ENCODE measurements at regions of chr17 and their contacts with region 1.

Region 1: DNA sequence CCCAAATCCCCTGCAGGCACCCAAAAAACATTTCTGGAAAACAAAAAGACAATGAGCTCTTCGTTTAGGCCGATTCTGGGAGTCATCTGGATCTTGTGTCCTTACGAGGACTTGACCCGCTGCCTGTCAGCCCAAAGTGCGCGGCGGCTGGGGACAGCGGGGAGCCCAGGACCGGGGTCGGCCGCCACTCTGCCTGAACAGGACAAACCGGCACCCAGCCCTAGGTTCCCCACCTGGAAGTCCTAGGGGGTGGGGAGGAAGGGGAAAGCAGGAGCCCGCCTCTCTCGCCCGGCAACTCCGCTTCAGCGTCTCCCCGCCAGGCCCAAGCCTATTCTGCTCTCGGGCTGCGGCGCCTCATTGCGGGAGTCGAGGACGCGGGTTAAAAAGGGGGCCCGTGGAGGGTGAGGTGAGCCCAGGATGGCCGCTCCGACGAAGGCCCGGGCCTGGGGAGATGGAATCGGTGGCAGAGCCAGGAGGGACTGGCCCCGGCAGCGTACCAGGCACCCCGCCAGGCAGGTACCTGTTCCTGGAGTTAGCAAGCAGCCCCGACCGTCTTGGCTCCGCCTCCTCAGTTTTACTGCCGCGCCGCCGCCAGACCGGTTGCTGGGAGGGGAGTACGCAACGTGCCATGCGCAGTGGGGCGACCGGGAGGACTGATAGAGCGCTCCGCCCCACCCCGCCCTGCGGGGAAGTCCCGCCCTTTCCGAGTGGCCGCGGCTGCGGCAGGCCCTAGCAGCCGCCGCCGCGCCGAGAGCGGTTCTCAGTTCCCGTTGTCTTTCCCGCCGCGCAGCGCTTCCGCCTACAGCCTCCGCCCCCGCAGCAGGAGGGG is at the start of gene STRADA:
- DNase-seq: peak; percentile 97
- ATAC-seq: peak; percentile 93
- H3K4me3 Mint-ChIP-seq: peak within 1 kb of the TSS; percentile 92
- H3K27ac Mint-ChIP-seq: peak within 1 kb of the TSS; percentile 97
- H3K4me1 Mint-ChIP-seq: peaks cover 24% of the 10 kb centered on the region
- H3K27me3 Mint-ChIP-seq: no peaks in the 10 kb centered on the region
- total RNA-seq, gene STRADA: 54.0 to 61.4 TPM

Region 2: GRCh38 chr17:63751806-63752205 is 10.4 kb after region 1 on chr17:
- POLR2A ChIA-PET with region 1: interaction called, 13 read pairs
- DNase-seq: no peak
- ATAC-seq: peak; percentile 83
- H3K4me3 Mint-ChIP-seq: peak overlapping the region; percentile 63
- H3K27ac Mint-ChIP-seq: peak overlapping the region; percentile 79
- H3K4me1 Mint-ChIP-seq: peaks cover 11% of the 10 kb centered on the region
- H3K27me3 Mint-ChIP-seq: no peaks in the 10 kb centered on the region

Region 3: GRCh38 chr17:64073771-64074703 is 332.6 kb after region 1 on chr17:
- POLR2A ChIA-PET with region 1: no interaction called
- DNase-seq: no peak
- ATAC-seq: no peak
- H3K4me3 Mint-ChIP-seq: no peak overlapping the region
- H3K27ac Mint-ChIP-seq: no peak overlapping the region
- H3K4me1 Mint-ChIP-seq: peaks cover 10% of the 10 kb centered on the region
- H3K27me3 Mint-ChIP-seq: no peaks in the 10 kb centered on the region